ENCODE measurements at regions of chr2 and their contacts with region 1.

Region 1: GRCh38 chr2:144430722-144431391 is 89.1 kb downstream of the ZEB2 start:
- DNase-seq: no peak
- H3K4me3 ChIP-seq: no peak overlapping the region
- H3K27ac ChIP-seq: peak overlapping the region; percentile 16 to 62
- H3K4me1 ChIP-seq: peaks cover 0 to 5% of the 10 kb centered on the region in 2 donors
- H3K27me3 ChIP-seq: no peaks in the 10 kb centered on the region
- CTCF ChIP-seq: no peak
- POLR2A ChIP-seq: no peak

Region 2: GRCh38 chr2:143071185-143071876 is 1359.5 kb before region 1 on chr2:
- intact Hi-C with region 1: loop called (anchors 5 kb)
- DNase-seq: no peak
- H3K4me3 ChIP-seq: no peak overlapping the region
- H3K27ac ChIP-seq: no peak overlapping the region
- H3K4me1 ChIP-seq: no peaks in the 10 kb centered on the region
- H3K27me3 ChIP-seq: no peaks in the 10 kb centered on the region
- CTCF ChIP-seq: no peak
- POLR2A ChIP-seq: no peak

Region 3: GRCh38 chr2:144493027-144493809 is 62.4 kb after region 1 on chr2:
- intact Hi-C with region 1: loop called (anchors 2 kb)
- DNase-seq: no peak
- H3K4me3 ChIP-seq: no peak overlapping the region
- H3K27ac ChIP-seq: no peak overlapping the region
- H3K4me1 ChIP-seq: no peaks in the 10 kb centered on the region
- H3K27me3 ChIP-seq: no peaks in the 10 kb centered on the region
- CTCF ChIP-seq: no peak
- POLR2A ChIP-seq: no peak